Naive thymus-derived CD4-positive, alpha-beta T cell (primary cell): ENCODE measurements at regions of chr12 and their contacts with region 1.

Region 1: GRCh38 chr12:111405149-111405860 is 418 bp upstream of the SH2B3 start:
- DNase-seq: peak; percentile 96 to 98 (median 97)
- ATAC-seq: peak; percentile 89
- H3K4me3 ChIP-seq: peak overlapping the region; percentile 68
- H3K4me3 Mint-ChIP-seq: peak overlapping the region; percentile 78 to 96 (median 90)
- H3K27ac ChIP-seq: peak overlapping the region; percentile 97
- H3K27ac Mint-ChIP-seq: peak overlapping the region; percentile 75 to 96 (median 89)
- H3K4me1 ChIP-seq: peaks cover 50 to 53% of the 10 kb centered on the region in 2 donors
- H3K4me1 Mint-ChIP-seq: peaks cover 34 to 63% (median 53%) of the 10 kb centered on the region in 7 donors
- H3K27me3 ChIP-seq: no peaks in the 10 kb centered on the region
- H3K27me3 Mint-ChIP-seq: no peaks in the 10 kb centered on the region

Region 2: DNA sequence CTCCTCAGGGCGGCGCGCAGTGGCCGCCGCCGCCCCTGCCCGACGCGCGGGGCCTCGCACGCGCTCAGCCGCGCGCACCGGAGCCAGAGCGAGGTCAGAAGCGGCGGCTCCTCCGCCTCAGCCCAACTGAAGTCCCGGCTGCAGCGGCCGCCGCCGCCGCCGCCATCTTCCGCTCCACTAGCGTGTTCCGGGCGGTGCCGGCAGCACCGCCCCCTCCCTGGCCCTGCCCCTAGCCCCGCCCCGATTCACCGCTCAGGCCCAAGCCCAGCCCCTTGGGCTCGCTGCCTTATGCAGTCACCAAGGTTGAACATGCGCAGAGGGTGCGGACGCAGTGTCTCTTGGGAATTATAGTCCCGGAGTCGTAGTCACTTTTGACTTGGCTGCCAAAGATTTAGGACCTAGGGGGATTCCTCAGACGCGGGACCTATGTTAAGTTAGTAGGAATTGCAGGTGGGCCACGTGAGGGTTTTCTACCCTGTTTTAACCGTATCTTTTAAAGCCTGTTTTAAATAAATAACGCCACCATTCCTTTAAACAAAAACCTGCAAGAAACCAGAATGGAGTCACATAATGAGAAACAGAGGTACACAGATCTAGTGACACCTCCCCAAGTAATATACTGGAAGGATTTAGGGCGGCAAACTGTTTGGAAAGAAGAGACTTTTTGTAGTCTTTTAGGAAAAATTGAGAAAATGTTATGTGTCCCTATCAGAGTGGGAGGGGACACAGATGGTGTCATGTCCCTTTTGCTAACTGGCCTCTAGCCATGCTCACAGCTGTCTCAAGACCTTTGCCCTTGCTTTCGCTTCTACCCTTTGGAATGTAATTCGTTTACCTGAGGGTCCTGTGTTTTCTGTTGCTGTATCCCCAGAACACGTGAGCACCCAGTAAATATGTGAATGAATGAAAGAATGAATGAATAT is 821.9 kb before region 1 on chr12 and contains the start of gene PPTC7:
- CTCF ChIA-PET with region 1: no interaction called
- POLR2A ChIA-PET with region 1: no interaction called
- intact Hi-C with region 1: loop called in 1 of 2 experiments (anchors 2 kb)
- DNase-seq: peak; percentile 84 to 97 (median 93)
- ATAC-seq: peak; percentile 98
- H3K4me3 ChIP-seq: peak within 1 kb of the TSS; percentile 72
- H3K4me3 Mint-ChIP-seq: peak within 1 kb of the TSS; percentile 91 to 97 (median 95)
- H3K27ac ChIP-seq: peak within 1 kb of the TSS; percentile 97
- H3K27ac Mint-ChIP-seq: peak within 1 kb of the TSS; percentile 93 to 97 (median 95)
- H3K4me1 ChIP-seq: peaks cover 26 to 55% of the 10 kb centered on the region in 2 donors
- H3K4me1 Mint-ChIP-seq: peaks cover 53 to 74% (median 67%) of the 10 kb centered on the region in 7 donors
- H3K27me3 ChIP-seq: no peaks in the 10 kb centered on the region
- H3K27me3 Mint-ChIP-seq: no peaks in the 10 kb centered on the region
- total RNA-seq, gene PPTC7: 36.7 to 43.8 (median 38.8) TPM

Region 3: GRCh38 chr12:110957652-110958051 is 447.7 kb before region 1 on chr12:
- CTCF ChIA-PET with region 1: no interaction called
- POLR2A ChIA-PET with region 1: no interaction called
- intact Hi-C with region 1: no loop called
- DNase-seq: no peak
- ATAC-seq: no peak
- H3K4me3 ChIP-seq: no peak overlapping the region
- H3K4me3 Mint-ChIP-seq: no peak overlapping the region
- H3K27ac ChIP-seq: no peak overlapping the region
- H3K27ac Mint-ChIP-seq: no peak overlapping the region
- H3K4me1 ChIP-seq: no peaks in the 10 kb centered on the region
- H3K4me1 Mint-ChIP-seq: no peaks in the 10 kb centered on the region
- H3K27me3 ChIP-seq: no peaks in the 10 kb centered on the region
- H3K27me3 Mint-ChIP-seq: peaks cover 8 to 31% (median 12%) of the 10 kb centered on the region in 5 donors

Region 4: GRCh38 chr12:111368788-111369495 is 36.4 kb before region 1 on chr12 and contains the start of gene PHETA1:
- CTCF ChIA-PET with region 1: no interaction called
- POLR2A ChIA-PET with region 1: no interaction called
- intact Hi-C with region 1: loop called in 1 of 2 experiments (anchors 2 kb)
- DNase-seq: peak; percentile 34 to 88 (median 55)
- ATAC-seq: peak; percentile 96
- H3K4me3 ChIP-seq: peak within 1 kb of the TSS; percentile 81
- H3K4me3 Mint-ChIP-seq: peak within 1 kb of the TSS; percentile 79 to 90 (median 86)
- H3K27ac ChIP-seq: peak within 1 kb of the TSS; percentile 56
- H3K27ac Mint-ChIP-seq: peak within 1 kb of the TSS in 6 of 9 donors; percentile 53 to 80 (median 67)
- H3K4me1 ChIP-seq: peaks cover 14 to 19% of the 10 kb centered on the region in 2 donors
- H3K4me1 Mint-ChIP-seq: peaks cover 15 to 32% (median 24%) of the 10 kb centered on the region in 7 donors
- H3K27me3 ChIP-seq: no peaks in the 10 kb centered on the region
- H3K27me3 Mint-ChIP-seq: peaks cover 0 to 26% (median 0%) of the 10 kb centered on the region in 5 donors
- total RNA-seq, gene PHETA1: 1.2 to 6.8 (median 5.4) TPM

Region 5: DNA sequence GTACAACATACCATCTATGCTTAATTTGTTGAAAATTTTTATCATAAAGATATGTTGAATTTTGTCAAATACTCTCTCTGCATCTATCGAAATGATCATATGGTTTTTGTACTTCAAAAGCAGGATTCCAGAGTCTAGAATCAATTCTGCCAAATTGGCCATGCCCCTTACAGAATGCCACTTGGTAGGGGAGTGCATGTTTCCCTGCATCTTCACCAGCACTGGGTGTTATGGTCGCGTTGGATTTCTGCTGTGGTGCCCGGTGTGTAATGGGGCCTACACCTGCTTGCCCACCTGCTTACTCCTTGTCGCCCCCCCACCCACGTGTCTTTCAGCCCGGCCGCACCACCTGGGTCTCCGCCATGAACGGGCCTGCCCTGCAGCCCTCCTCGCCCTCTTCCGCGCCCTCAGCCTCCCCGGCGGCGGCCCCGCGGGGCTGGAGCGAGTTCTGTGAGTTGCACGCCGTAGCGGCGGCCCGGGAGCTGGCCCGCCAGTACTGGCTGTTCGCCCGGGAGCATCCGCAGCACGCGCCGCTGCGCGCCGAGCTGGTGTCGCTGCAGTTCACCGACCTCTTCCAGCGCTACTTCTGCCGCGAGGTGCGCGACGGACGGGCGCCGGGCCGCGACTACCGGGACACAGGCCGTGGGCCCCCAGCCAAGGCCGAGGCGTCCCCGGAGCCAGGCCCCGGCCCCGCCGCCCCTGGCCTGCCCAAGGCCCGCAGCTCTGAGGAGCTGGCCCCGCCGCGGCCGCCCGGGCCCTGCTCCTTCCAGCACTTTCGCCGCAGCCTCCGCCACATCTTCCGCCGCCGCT is 12.7 kb after region 1 on chr12:
- CTCF ChIA-PET with region 1: interaction called, 9 read pairs
- POLR2A ChIA-PET with region 1: interaction called, 5 read pairs
- intact Hi-C with region 1: loop called in 1 of 2 experiments (anchors 1 kb)
- DNase-seq: no peak
- ATAC-seq: no peak
- H3K4me3 ChIP-seq: no peak overlapping the region
- H3K4me3 Mint-ChIP-seq: no peak overlapping the region
- H3K27ac ChIP-seq: no peak overlapping the region
- H3K27ac Mint-ChIP-seq: peak overlapping the region in 1 of 9 donors; percentile 33
- H3K4me1 ChIP-seq: peaks cover 15 to 22% of the 10 kb centered on the region in 2 donors
- H3K4me1 Mint-ChIP-seq: peaks cover 19 to 43% (median 35%) of the 10 kb centered on the region in 7 donors
- H3K27me3 ChIP-seq: no peaks in the 10 kb centered on the region
- H3K27me3 Mint-ChIP-seq: no peaks in the 10 kb centered on the region

Region 6: GRCh38 chr12:111434680-111435338 is 29.5 kb after region 1 on chr12:
- CTCF ChIA-PET with region 1: interaction called, 31 read pairs
- POLR2A ChIA-PET with region 1: interaction called, 127 read pairs
- intact Hi-C with region 1: loop called (anchors 1 kb)
- DNase-seq: peak; percentile 62 to 94 (median 83)
- ATAC-seq: peak; percentile 83
- H3K4me3 ChIP-seq: peak overlapping the region; percentile 56
- H3K4me3 Mint-ChIP-seq: peak overlapping the region; percentile 68 to 88 (median 85)
- H3K27ac ChIP-seq: peak overlapping the region; percentile 94
- H3K27ac Mint-ChIP-seq: peak overlapping the region; percentile 97 to 99 (median 99)
- H3K4me1 ChIP-seq: peaks cover 84% of the 10 kb centered on the region in 2 donors
- H3K4me1 Mint-ChIP-seq: peaks cover 79 to 96% (median 91%) of the 10 kb centered on the region in 7 donors
- H3K27me3 ChIP-seq: no peaks in the 10 kb centered on the region
- H3K27me3 Mint-ChIP-seq: no peaks in the 10 kb centered on the region

Region 7: DNA sequence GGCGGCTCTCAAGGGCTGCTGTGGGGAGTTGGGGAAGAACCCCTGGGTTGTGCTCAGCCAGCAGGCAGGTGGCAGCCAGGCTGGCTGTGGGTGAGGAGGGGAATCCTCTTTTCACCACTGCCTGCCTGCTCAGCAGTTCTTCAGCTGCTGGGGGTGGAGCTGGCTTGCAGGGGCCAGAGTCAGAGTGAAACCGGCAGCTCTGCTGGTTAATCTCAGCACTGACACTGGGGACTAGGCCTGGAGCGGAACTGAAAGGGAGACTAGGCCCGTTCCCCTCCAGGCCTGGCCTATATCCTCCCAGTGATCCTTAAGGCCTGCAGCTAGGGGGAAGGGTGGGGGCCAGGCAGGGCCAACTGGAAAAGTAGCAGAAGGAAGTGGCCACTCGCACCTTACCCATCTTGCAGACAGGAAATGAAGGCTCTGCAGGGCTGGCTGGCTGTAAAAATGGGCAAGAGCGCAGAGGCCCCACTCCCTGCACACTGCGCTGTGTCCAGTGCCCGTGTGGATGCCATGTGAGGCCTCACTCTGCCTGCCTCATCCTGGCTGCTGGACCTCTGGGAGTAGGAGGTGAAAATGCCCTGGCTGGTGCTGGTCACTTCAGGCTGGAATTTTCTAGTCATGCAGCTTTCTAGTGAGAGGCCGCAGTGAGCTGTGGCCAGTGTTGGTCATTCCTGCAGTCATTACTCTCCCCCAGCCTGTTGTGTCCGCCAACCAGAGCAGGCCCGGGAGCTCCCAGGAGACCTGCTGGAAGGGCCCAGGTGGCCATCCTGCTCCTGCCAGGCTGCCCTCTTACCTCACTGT is 39.8 kb after region 1 on chr12:
- CTCF ChIA-PET with region 1: interaction called, 462 read pairs
- POLR2A ChIA-PET with region 1: interaction called, 71 read pairs
- intact Hi-C with region 1: loop called (anchors 1 kb)
- DNase-seq: peak; percentile 55 to 83 (median 74)
- ATAC-seq: peak; percentile 95
- H3K4me3 ChIP-seq: peak overlapping the region; percentile 6
- H3K4me3 Mint-ChIP-seq: peak overlapping the region; percentile 46 to 77 (median 68)
- H3K27ac ChIP-seq: peak overlapping the region; percentile 77
- H3K27ac Mint-ChIP-seq: peak overlapping the region; percentile 83 to 99 (median 91)
- H3K4me1 ChIP-seq: peaks cover 34 to 59% of the 10 kb centered on the region in 2 donors
- H3K4me1 Mint-ChIP-seq: peaks cover 36 to 91% (median 71%) of the 10 kb centered on the region in 7 donors
- H3K27me3 ChIP-seq: no peaks in the 10 kb centered on the region
- H3K27me3 Mint-ChIP-seq: no peaks in the 10 kb centered on the region

Region 8: GRCh38 chr12:111685744-111686517 is 280.6 kb after region 1 on chr12 and contains the starts of genes ACAD10 and BRAP:
- CTCF ChIA-PET with region 1: no interaction called
- POLR2A ChIA-PET with region 1: no interaction called
- intact Hi-C with region 1: loop called in 1 of 2 experiments (anchors 5 kb)
- DNase-seq: peak; percentile 82 to 98 (median 93)
- ATAC-seq: peak; percentile 96
- H3K4me3 ChIP-seq: peak within 1 kb of the TSS; percentile 90
- H3K4me3 Mint-ChIP-seq: peak within 1 kb of the TSS; percentile 90 to 98 (median 96)
- H3K27ac ChIP-seq: peak within 1 kb of the TSS; percentile 83
- H3K27ac Mint-ChIP-seq: peak within 1 kb of the TSS; percentile 90 to 98 (median 96)
- H3K4me1 ChIP-seq: peaks cover 17 to 18% of the 10 kb centered on the region in 2 donors
- H3K4me1 Mint-ChIP-seq: peaks cover 23 to 54% (median 44%) of the 10 kb centered on the region in 7 donors
- H3K27me3 ChIP-seq: no peaks in the 10 kb centered on the region
- H3K27me3 Mint-ChIP-seq: peaks cover 0 to 2% (median 0%) of the 10 kb centered on the region in 5 donors
- total RNA-seq, gene ACAD10: 28.4 to 65.3 (median 36.0) TPM
- total RNA-seq, gene BRAP: 19.5 to 25.5 (median 23.0) TPM